ENCODE measurements at regions of chr1 and their contacts with region 1.

Region 1: DNA sequence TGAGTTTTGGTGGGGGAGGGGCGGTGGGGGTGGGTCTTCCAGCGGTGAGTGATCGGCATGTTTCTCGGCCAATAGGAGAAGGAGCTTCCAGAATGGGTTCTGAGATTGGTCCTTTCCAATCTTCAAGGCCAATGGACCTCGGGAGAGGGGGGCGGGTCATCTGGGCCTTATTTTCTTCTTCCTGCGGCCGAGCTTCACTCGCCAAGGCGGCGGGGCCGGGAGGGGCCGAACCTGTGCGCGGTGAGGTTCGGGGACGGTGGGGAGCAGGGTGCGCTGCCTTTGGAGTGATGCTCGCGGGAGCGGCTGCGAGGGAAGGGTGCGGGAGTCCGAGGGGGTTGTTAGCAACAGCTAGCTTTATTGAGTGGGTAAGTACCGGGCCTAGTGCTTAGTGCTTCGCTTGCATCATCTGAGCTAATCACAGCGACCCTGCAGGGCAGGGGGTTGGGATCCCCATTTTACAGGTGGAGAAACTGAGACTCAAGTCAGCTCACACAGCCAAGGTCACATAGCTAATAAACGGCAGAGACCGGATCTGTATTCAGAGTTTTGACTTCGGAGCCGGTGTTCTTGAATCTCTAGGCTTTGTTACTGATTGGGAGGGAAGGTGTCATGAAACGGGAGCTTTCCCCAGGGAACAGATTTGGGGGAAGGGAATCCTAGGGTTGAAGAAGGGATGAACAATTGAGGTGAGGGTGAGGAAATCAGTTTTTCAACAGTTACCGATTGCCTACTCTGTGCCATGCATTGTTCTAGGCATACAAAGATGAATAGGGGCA is 549 bp downstream of the KDM4A start:
- DNase-seq: peak; percentile 96
- ATAC-seq: peak; percentile 82
- H3K4me3 Mint-ChIP-seq: peak overlapping the region; percentile 98
- H3K27ac Mint-ChIP-seq: peak overlapping the region; percentile 91
- H3K4me1 Mint-ChIP-seq: peaks cover 25% of the 10 kb centered on the region
- H3K27me3 Mint-ChIP-seq: peaks cover 4% of the 10 kb centered on the region

Region 2: DNA sequence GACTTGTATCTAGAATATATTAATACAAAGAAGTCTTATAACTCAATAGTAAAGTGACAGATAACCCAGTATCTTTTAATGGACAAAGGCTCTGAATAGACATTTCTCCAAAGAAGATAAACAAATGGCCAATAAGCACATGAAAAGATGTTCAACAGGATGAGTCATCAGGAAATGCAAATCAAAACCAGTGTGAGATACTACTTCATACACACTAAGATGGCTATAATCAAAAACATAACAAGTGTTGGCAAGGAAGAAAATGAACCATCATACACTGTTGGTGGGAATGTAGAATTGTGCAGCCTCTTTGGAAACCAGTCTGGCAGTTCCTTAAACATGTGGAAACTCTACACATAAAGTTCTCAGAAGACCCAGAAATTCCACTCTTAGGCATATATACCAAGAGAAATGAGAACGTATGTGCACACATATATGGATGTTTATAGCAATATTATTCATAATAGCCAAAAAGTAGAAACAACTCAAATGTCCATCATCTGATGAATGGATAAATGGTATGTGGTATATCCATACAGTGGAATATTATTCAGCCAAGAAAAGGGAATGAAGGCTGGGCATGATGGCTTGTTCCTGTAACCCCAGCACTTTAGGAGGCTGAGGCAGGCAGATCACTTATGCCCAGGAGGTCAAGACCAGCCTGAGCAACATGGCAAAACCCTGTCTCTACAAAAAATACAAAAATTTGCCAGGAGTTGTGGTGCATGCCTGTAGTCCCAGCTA is 322.8 kb before region 1 on chr1:
- CTCF ChIA-PET with region 1: no interaction called
- POLR2A ChIA-PET with region 1: no interaction called
- DNase-seq: no peak
- ATAC-seq: no peak
- H3K4me3 Mint-ChIP-seq: no peak overlapping the region
- H3K27ac Mint-ChIP-seq: no peak overlapping the region
- H3K4me1 Mint-ChIP-seq: peaks cover 13% of the 10 kb centered on the region
- H3K27me3 Mint-ChIP-seq: no peaks in the 10 kb centered on the region

Region 3: GRCh38 chr1:43529206-43529731 is 121.2 kb before region 1 on chr1:
- CTCF ChIA-PET with region 1: interaction called, 13 read pairs
- POLR2A ChIA-PET with region 1: interaction called, 7 read pairs
- DNase-seq: peak; percentile 85
- ATAC-seq: peak; percentile 73
- H3K4me3 Mint-ChIP-seq: no peak overlapping the region
- H3K27ac Mint-ChIP-seq: no peak overlapping the region
- H3K4me1 Mint-ChIP-seq: peaks cover 20% of the 10 kb centered on the region
- H3K27me3 Mint-ChIP-seq: peaks cover 48% of the 10 kb centered on the region

Region 4: DNA sequence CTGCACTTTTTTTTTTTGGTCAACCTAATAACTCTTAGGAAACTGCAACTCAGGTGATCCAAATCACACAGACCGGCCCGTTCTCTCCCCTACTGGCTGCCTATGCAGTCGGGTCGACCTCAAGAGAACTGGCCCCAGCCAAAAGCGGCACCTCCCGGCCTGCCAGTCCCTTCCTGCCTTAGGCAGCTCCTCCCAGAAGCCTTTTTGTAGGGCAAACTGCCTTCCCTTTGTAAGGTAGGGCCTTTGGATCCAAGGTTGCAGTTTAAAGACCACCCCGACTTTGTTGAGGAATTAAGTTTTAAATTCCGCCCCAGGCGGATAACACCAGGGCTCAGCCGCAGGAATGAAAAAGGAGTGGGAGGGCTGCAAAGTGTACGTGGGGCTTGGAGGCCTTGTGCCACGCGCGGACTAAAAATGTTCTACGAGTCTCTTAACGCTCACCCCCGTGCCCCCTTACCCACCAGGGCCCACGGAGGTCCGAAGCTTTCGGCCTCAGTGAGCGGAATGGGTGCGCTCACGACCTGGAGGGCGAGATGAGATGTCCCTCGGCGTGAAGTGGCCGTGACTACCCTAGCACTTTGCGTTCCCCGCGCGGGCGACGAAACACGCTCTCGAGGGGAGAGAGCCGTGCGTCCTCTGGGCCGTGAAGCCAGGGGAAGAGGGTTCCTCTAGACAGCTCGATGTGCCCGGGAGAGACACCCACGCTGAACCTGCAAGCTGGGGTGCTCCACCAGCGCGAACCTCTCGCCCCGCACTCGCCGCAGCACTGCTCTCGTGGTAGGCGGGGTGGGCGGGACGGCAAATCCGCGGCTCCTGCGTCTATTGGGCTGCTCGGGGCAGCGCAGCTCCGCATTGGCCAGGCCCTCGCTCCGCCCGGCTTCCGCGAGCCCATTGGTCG is 56.3 kb after region 1 on chr1:
- CTCF ChIA-PET with region 1: interaction called, 4 read pairs
- POLR2A ChIA-PET with region 1: interaction called, 20 read pairs
- DNase-seq: peak; percentile 94
- ATAC-seq: peak; percentile 98
- H3K4me3 Mint-ChIP-seq: peak overlapping the region; percentile 91
- H3K27ac Mint-ChIP-seq: peak overlapping the region; percentile 82
- H3K4me1 Mint-ChIP-seq: peaks cover 40% of the 10 kb centered on the region
- H3K27me3 Mint-ChIP-seq: no peaks in the 10 kb centered on the region